Activated naive CD4-positive, alpha-beta T cell treated with anti-CD3 and anti-CD28 coated beads, Interleukin-2, amount 10 ng/mL, durations not matched to agents 7 days and 5 days (primary cell): ENCODE measurements at regions of chr20 and their contacts with region 1.

Region 1: GRCh38 chr20:43942661-43943290 is 28.1 kb downstream of the TOX2 start:
- DNase-seq: peak; percentile 31
- H3K4me3 Mint-ChIP-seq: peak overlapping the region; percentile 21
- H3K27ac Mint-ChIP-seq: peak overlapping the region; percentile 89
- H3K4me1 Mint-ChIP-seq: peaks cover 78% of the 10 kb centered on the region
- H3K27me3 Mint-ChIP-seq: peaks cover 57% of the 10 kb centered on the region

Region 2: DNA sequence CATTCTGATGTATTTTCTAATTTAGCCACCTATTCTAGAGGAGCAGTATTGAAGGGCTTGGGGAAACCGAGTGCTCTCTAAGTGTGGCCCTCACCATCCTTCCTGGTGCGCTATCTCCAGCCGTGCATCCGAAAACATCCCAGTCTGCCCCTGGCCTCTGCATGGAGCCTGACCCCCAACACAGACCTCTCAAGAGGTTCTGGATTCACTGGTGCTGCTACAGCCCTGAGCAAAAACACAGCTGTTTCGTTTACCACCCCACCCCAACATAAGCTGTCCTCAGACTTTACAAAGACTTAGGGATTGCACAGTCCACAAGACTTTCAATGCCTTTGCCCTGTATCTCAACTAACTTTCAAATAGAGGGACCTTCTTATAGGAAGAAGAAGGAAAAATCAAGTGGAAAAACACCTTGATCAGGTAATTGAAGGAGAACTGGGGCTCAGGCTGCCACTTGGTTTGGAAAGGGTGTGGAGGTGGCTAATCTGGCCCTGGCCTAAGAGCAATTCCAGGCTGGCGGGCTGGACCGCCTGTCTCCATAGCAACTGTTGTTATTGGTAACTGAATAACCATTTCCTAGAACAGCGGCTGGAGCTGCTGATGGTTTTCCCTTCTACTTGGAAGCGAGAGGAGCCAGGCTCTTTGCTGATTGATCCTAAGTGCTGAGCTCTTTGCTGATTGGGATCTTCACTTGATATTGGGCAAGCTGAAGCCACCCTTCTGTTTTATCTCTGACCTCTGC is 118.3 kb before region 1 on chr20:
- CTCF ChIA-PET with region 1: no interaction called
- DNase-seq: no peak
- H3K4me3 Mint-ChIP-seq: no peak overlapping the region
- H3K27ac Mint-ChIP-seq: no peak overlapping the region
- H3K4me1 Mint-ChIP-seq: no peaks in the 10 kb centered on the region
- H3K27me3 Mint-ChIP-seq: peaks cover 28% of the 10 kb centered on the region

Region 3: GRCh38 chr20:43840382-43841070 is 102.2 kb before region 1 on chr20:
- CTCF ChIA-PET with region 1: interaction called, 12 read pairs
- DNase-seq: peak; percentile 53
- H3K4me3 Mint-ChIP-seq: no peak overlapping the region
- H3K27ac Mint-ChIP-seq: no peak overlapping the region
- H3K4me1 Mint-ChIP-seq: peaks cover 46% of the 10 kb centered on the region
- H3K27me3 Mint-ChIP-seq: peaks cover 3% of the 10 kb centered on the region